MCF 10A (cell line): ENCODE measurements at regions of chr4 and their contacts with region 1.

Region 1: GRCh38 chr4:128322995-128323394 is 35.4 kb upstream of the PGRMC2 start:
- DNase-seq: peak; percentile 27
- H3K4me3 Mint-ChIP-seq: no peak overlapping the region
- H3K27ac Mint-ChIP-seq: no peak overlapping the region
- H3K4me1 Mint-ChIP-seq: peaks cover 6% of the 10 kb centered on the region
- H3K27me3 Mint-ChIP-seq: no peaks in the 10 kb centered on the region
- CTCF ChIP-seq: no peak

Region 2: GRCh38 chr4:128357286-128357685 is 34.3 kb after region 1 on chr4:
- CTCF ChIA-PET with region 1: no interaction called
- POLR2A ChIA-PET with region 1: interaction called, 3 read pairs
- intact Hi-C with region 1: loop called (anchors 1 kb)
- DNase-seq: no peak
- H3K4me3 Mint-ChIP-seq: no peak overlapping the region
- H3K27ac Mint-ChIP-seq: no peak overlapping the region
- H3K4me1 Mint-ChIP-seq: peaks cover 28% of the 10 kb centered on the region
- H3K27me3 Mint-ChIP-seq: no peaks in the 10 kb centered on the region
- CTCF ChIP-seq: no peak

Region 3: GRCh38 chr4:128542041-128542440 is 219.0 kb after region 1 on chr4:
- CTCF ChIA-PET with region 1: no interaction called
- POLR2A ChIA-PET with region 1: no interaction called
- intact Hi-C with region 1: no loop called
- DNase-seq: no peak
- H3K4me3 Mint-ChIP-seq: no peak overlapping the region
- H3K27ac Mint-ChIP-seq: no peak overlapping the region
- H3K4me1 Mint-ChIP-seq: no peaks in the 10 kb centered on the region
- H3K27me3 Mint-ChIP-seq: no peaks in the 10 kb centered on the region
- CTCF ChIP-seq: no peak